ENCODE measurements at regions of chr11 and their contacts with region 1.

Region 1: DNA sequence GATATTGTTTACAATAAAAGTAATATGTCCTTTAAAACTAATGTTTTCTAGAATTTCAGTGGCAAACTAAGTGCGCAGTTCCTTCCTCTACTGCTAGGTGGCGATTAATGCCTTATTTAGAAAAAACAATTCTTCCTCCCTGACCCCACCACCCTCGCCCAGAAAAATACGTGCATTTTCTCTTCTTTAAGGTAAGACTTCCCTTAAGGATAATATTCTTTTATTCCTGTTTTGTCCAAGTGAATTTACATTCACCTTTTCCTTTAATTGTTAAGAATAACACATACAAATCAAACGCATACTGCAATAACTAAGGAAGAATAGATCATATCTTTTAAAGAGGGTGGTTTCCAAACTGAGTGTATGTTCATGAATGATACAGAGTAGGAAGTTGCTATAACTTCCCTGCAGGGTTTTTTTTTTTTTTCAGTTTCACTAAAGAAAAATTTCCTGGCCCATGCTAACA is 17.0 kb upstream of the PSMA1 start:
- DNase-seq: no peak
- H3K4me3 ChIP-seq: no peak overlapping the region
- H3K27ac ChIP-seq: peak overlapping the region in 1 of 4 donors; percentile 5
- H3K4me1 ChIP-seq: peaks cover 17 to 52% (median 46%) of the 10 kb centered on the region in 4 donors
- H3K27me3 ChIP-seq: no peaks in the 10 kb centered on the region
- CTCF ChIP-seq: peak; percentile 78 to 89 (median 79)
- EP300 ChIP-seq: no peak
- POLR2A ChIP-seq: no peak

Region 2: DNA sequence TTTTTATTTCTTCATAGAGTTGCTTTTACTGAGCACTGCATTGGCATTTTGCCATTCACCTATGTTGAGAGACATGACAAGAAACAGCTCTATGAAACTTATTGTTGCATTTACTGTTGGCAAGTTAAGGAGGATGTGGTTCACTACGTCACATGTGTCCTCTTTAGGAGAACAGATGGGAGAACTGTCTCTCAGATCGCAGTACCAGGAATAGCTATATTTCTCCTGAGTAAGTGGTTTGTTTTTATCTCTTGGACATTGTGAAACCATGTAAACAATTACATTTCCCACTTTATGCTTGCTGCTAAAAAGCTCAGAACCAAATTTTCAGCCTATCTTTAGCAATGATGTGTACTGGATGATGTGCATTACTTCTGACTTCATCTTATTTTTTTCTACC is 17.8 kb after region 1 on chr11:
- intact Hi-C with region 1: no loop called
- DNase-seq: no peak
- H3K4me3 ChIP-seq: no peak overlapping the region
- H3K27ac ChIP-seq: no peak overlapping the region
- H3K4me1 ChIP-seq: peaks cover 0 to 13% (median 0%) of the 10 kb centered on the region in 4 donors
- H3K27me3 ChIP-seq: no peaks in the 10 kb centered on the region
- CTCF ChIP-seq: no peak
- EP300 ChIP-seq: no peak
- POLR2A ChIP-seq: no peak

Region 3: GRCh38 chr11:14643697-14644225 is 106.6 kb after region 1 on chr11 and contains the start of gene PDE3B:
- intact Hi-C with region 1: loop called (anchors 5 kb)
- DNase-seq: no peak
- H3K4me3 ChIP-seq: peak within 1 kb of the TSS; percentile 81 to 95 (median 82)
- H3K27ac ChIP-seq: peak within 1 kb of the TSS; percentile 88 to 95 (median 90)
- H3K4me1 ChIP-seq: peaks cover 10 to 66% (median 39%) of the 10 kb centered on the region in 4 donors
- H3K27me3 ChIP-seq: no peaks in the 10 kb centered on the region
- CTCF ChIP-seq: no peak
- EP300 ChIP-seq: no peak
- POLR2A ChIP-seq: no peak
- total RNA-seq, gene PDE3B: 13.3 to 23.3 (median 21.5) TPM

Region 4: GRCh38 chr11:14764579-14765527 is 227.7 kb after region 1 on chr11:
- intact Hi-C with region 1: loop called (anchors 10 kb)
- DNase-seq: no peak
- H3K4me3 ChIP-seq: no peak overlapping the region
- H3K27ac ChIP-seq: no peak overlapping the region
- H3K4me1 ChIP-seq: no peaks in the 10 kb centered on the region
- H3K27me3 ChIP-seq: no peaks in the 10 kb centered on the region
- CTCF ChIP-seq: no peak
- EP300 ChIP-seq: no peak
- POLR2A ChIP-seq: no peak

Region 5: GRCh38 chr11:14892036-14892567 is 354.9 kb after region 1 on chr11 and contains the start of gene CYP2R1:
- intact Hi-C with region 1: loop called (anchors 5 kb)
- DNase-seq: peak; percentile 98
- H3K4me3 ChIP-seq: peak within 1 kb of the TSS; percentile 69 to 91 (median 78)
- H3K27ac ChIP-seq: peak within 1 kb of the TSS; percentile 86 to 98 (median 92)
- H3K4me1 ChIP-seq: peaks cover 17 to 30% (median 22%) of the 10 kb centered on the region in 4 donors
- H3K27me3 ChIP-seq: no peaks in the 10 kb centered on the region
- CTCF ChIP-seq: no peak
- EP300 ChIP-seq: no peak
- POLR2A ChIP-seq: no peak
- total RNA-seq, gene CYP2R1: 7.5 to 19.1 (median 12.8) TPM

Region 6: DNA sequence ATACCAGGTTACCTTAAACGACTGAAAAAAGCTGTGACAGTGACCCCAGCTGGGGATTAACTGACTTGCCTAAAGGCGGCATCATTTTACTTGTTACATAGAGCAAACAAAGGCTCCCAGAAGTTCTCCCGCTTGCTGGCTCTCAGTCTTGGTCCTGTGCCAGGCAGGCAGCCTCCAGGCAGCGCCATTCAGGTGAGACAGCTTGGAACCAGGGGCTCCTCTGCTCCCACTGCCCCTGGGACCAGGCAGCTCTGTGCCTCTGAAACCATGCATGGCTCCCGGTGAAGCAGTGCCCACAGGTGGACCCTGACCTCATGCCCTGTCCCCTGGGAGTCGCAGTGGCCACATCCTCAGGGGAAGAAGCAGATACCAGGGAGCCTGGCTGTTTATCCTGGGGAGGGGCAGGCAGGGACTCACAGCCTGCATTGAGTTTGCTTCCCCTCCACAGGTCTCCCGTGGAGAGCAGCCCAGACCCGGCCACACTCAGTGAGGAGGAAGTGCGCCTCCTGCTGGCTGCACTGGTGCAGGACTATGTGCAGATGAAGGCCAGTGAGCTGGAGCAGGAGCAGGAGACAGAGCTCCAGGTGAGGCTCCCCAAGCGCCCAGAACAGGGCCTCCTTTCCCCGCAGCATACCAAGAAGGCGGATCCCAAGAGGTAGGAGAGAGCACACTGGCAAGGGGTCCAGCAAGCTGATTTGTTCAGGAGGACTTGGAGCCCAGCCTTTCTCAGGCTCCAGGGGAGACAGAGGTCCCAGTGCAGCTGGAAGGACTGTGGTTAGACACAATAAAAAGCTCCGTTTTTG is 370.4 kb after region 1 on chr11:
- intact Hi-C with region 1: loop called (anchors 5 kb)
- DNase-seq: peak; percentile 94
- H3K4me3 ChIP-seq: no peak overlapping the region
- H3K27ac ChIP-seq: no peak overlapping the region
- H3K4me1 ChIP-seq: peaks cover 7 to 31% (median 22%) of the 10 kb centered on the region in 4 donors
- H3K27me3 ChIP-seq: no peaks in the 10 kb centered on the region
- CTCF ChIP-seq: peak; percentile 60 to 83 (median 63)
- EP300 ChIP-seq: no peak
- POLR2A ChIP-seq: no peak

Measured in esophagus muscularis mucosa (tissue), 4 donors.